ENCODE measurements at regions of chr5 and their contacts with region 1.

Region 1: GRCh38 chr5:153807801-153808200 is 230.9 kb downstream of the FAM114A2 start:
- DNase-seq: no peak
- H3K4me3 ChIP-seq: no peak overlapping the region
- H3K27ac ChIP-seq: no peak overlapping the region
- H3K4me1 ChIP-seq: no peaks in the 10 kb centered on the region
- H3K27me3 ChIP-seq: no peaks in the 10 kb centered on the region
- CTCF ChIP-seq: no peak

Region 2: DNA sequence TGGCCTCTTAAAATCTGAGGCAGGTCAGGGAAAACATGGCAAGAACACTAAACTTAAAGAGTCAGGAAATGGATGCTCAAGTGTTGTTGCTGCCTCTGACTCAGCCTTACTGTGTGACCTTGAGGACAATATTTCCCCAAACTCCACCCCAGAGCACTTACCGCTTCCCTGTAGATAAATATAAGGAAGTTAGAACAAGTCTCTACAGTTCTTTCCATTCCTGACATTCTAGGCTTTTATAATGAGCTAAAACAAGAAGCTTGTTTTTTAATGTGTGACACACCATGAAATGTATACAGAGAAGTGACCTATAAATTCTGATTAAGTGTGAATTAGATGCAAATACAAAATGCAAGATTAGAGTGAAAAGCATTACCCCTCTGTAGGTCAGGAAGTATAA is 188.0 kb before region 1 on chr5:
- intact Hi-C with region 1: no loop called
- DNase-seq: no peak
- H3K4me3 ChIP-seq: no peak overlapping the region
- H3K27ac ChIP-seq: no peak overlapping the region
- H3K4me1 ChIP-seq: no peaks in the 10 kb centered on the region
- H3K27me3 ChIP-seq: no peaks in the 10 kb centered on the region
- CTCF ChIP-seq: no peak

Region 3: DNA sequence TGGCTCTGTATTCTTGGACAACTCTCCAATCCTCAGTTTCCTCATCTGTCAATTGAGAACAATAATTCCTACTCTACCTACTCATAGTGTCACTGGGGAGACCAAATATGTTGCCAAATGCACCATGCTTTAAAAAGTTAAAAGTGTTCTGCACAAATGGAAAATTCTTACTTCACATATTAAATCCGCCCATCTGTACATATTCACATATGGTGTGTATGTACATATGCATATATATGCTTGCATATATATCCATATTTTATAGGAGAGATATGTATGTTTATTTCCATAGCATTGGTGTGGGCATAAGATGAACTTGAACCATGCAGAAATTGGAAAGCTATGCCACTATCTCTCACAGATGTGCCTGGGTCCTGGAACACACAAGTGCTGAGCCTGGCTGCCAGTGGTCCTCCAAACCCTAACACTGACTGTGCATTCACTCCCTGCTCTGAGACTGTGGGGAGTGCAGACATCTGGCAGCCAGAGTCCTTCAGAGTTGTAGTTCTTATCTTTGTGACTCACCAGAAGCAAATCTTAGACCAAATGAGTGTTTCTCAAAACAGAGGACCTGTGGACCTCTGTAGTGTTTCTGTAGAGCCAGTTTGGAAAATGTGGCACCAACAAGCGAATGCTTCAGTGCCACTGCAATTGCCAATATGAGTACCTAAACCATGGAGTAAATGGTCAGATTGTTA is 148.6 kb before region 1 on chr5:
- intact Hi-C with region 1: no loop called
- DNase-seq: no peak
- H3K4me3 ChIP-seq: no peak overlapping the region
- H3K27ac ChIP-seq: no peak overlapping the region
- H3K4me1 ChIP-seq: peaks cover 0 to 17% (median 0%) of the 10 kb centered on the region in 4 donors
- H3K27me3 ChIP-seq: no peaks in the 10 kb centered on the region
- CTCF ChIP-seq: no peak

Region 4: DNA sequence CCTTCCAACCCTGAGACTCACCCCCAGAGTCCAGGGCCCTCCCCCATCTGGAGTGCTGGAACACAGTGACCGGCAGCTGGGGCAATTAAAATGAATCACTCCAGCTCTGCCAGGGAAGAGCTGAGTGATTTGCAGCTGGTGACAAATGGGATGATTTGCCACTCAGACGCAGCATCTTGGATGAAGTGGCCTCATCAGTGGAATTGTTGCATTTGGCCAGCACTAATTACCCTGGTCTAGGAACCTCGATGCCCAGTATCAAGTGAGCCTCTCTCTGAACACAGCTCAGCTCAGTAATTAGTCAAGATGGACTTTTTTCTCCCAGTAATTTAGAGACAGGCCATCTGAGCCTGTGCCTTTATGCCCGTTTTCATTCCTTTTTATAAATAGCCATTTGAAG is 57.8 kb before region 1 on chr5:
- intact Hi-C with region 1: loop called (anchors 10 kb)
- DNase-seq: no peak
- H3K4me3 ChIP-seq: no peak overlapping the region
- H3K27ac ChIP-seq: no peak overlapping the region
- H3K4me1 ChIP-seq: peaks cover 0 to 5% (median 0%) of the 10 kb centered on the region in 4 donors
- H3K27me3 ChIP-seq: no peaks in the 10 kb centered on the region
- CTCF ChIP-seq: no peak

Region 5: GRCh38 chr5:153831969-153832368 is 24.2 kb after region 1 on chr5:
- intact Hi-C with region 1: no loop called
- DNase-seq: no peak
- H3K4me3 ChIP-seq: no peak overlapping the region
- H3K27ac ChIP-seq: no peak overlapping the region
- H3K4me1 ChIP-seq: no peaks in the 10 kb centered on the region
- H3K27me3 ChIP-seq: no peaks in the 10 kb centered on the region
- CTCF ChIP-seq: no peak

Region 6: GRCh38 chr5:154868702-154869101 is 1060.9 kb after region 1 on chr5:
- intact Hi-C with region 1: no loop called
- DNase-seq: no peak
- H3K4me3 ChIP-seq: no peak overlapping the region
- H3K27ac ChIP-seq: no peak overlapping the region
- H3K4me1 ChIP-seq: peaks cover 0 to 44% (median 5%) of the 10 kb centered on the region in 4 donors
- H3K27me3 ChIP-seq: no peaks in the 10 kb centered on the region
- CTCF ChIP-seq: no peak

Measured in tibial artery (tissue), 4 donors.